Activated CD4-positive, alpha-beta memory T cell treated with anti-CD3 and anti-CD28 coated beads for 36 hours (primary cell): ENCODE measurements at regions of chr10 and their contacts with region 1.

Region 1: DNA sequence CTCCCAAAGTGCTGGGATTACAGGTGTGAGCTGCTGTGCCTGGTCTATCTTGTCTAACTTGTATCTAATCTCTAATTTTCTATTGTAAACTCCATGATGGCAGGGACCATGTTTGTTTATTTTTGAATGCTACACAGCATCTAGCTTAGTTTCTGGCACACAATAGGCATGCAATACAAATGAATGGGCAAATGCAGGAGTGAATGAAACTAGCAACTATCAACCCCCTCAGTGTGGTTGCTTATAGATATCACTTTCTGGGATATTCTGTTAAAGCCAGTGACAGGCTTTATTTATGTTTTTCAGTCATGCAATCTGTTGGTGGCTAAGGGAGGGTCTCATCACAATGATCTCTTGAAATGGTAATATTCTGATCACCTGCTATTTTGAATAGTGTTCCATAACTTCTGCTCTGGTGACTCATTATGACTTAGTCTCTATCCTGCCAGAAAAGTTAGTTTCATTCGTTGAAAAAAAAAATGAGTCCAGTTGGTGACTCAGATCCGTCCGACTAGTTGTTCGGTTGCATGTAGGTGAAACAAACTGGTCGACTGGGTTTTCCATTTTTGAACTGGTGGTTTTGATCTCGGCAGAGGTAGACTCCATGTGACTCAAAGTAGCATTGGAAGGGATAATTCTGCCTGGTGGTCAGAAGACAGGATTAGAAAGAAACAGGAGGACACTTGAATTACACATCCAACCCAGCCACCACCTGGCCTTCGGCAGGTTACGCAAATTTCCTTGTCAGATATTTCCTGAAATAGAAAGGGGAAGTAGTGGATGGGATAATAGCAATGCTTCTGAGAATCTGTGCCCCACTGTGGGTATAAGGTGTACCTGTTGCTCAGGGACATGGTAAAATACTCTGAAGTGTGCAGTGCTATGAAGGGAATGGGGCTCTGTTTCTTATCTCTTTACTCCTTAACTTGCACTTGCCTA is 76.8 kb downstream of the GATA3 start:
- DNase-seq: peak; percentile 71
- H3K4me3 Mint-ChIP-seq: peak overlapping the region; percentile 38
- H3K27ac Mint-ChIP-seq: peak overlapping the region; percentile 50
- H3K4me1 Mint-ChIP-seq: peaks cover 42% of the 10 kb centered on the region
- H3K27me3 Mint-ChIP-seq: peaks cover 9% of the 10 kb centered on the region

Region 2: GRCh38 chr10:8088504-8088903 is 42.7 kb before region 1 on chr10:
- CTCF ChIA-PET with region 1: no interaction called
- POLR2A ChIA-PET with region 1: no interaction called
- intact Hi-C with region 1: loop called (anchors 5 kb)
- DNase-seq: peak; percentile 65
- H3K4me3 Mint-ChIP-seq: no peak overlapping the region
- H3K27ac Mint-ChIP-seq: no peak overlapping the region
- H3K4me1 Mint-ChIP-seq: peaks cover 18% of the 10 kb centered on the region
- H3K27me3 Mint-ChIP-seq: no peaks in the 10 kb centered on the region

Region 3: DNA sequence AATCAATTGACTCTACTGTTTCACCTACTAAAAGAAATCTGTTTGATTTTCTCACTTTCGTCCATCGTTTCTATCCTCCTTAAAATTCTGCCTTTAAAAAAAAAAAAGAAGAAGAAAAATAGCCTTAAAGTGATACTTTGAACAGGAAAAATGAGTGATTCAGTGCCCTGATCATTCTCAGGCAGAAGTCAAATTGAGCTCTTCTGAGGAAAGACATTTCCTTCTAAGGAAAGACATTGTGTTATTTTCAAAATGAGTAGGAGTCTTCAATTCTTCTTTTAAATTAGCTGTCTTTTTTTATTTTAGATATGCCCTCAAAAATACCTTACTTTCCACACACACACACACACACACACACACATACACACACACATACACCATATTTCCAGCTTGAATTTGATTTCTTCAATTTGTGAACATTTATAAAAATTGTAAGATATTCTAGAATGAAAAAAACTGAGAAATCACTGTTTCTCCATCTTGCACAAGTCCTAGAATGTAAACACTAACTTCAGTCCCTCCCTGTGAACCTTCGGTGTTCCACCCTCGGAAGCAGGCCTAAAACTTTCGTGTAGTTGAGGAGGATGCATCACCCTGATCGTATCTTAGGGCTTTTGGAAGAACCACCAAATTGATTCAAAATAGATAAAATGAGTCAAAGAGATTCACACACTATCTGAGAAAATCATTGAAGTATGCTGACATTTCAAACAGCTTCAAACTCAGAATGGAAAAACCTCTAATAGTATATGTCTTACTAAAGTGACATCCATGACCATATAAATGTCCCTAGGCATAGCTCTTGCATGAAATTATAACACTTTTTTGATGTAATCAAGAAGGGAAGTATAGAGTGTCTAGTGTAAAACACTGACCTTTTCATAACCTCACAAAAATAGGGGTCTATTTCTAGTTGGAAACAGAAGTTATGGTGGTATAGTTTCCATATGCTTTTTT is 194.1 kb after region 1 on chr10:
- CTCF ChIA-PET with region 1: no interaction called
- POLR2A ChIA-PET with region 1: interaction called, 9 read pairs
- intact Hi-C with region 1: loop called (anchors 1 kb)
- DNase-seq: peak; percentile 53
- H3K4me3 Mint-ChIP-seq: peak overlapping the region; percentile 20
- H3K27ac Mint-ChIP-seq: peak overlapping the region; percentile 89
- H3K4me1 Mint-ChIP-seq: peaks cover 52% of the 10 kb centered on the region
- H3K27me3 Mint-ChIP-seq: peaks cover 3% of the 10 kb centered on the region

Region 4: DNA sequence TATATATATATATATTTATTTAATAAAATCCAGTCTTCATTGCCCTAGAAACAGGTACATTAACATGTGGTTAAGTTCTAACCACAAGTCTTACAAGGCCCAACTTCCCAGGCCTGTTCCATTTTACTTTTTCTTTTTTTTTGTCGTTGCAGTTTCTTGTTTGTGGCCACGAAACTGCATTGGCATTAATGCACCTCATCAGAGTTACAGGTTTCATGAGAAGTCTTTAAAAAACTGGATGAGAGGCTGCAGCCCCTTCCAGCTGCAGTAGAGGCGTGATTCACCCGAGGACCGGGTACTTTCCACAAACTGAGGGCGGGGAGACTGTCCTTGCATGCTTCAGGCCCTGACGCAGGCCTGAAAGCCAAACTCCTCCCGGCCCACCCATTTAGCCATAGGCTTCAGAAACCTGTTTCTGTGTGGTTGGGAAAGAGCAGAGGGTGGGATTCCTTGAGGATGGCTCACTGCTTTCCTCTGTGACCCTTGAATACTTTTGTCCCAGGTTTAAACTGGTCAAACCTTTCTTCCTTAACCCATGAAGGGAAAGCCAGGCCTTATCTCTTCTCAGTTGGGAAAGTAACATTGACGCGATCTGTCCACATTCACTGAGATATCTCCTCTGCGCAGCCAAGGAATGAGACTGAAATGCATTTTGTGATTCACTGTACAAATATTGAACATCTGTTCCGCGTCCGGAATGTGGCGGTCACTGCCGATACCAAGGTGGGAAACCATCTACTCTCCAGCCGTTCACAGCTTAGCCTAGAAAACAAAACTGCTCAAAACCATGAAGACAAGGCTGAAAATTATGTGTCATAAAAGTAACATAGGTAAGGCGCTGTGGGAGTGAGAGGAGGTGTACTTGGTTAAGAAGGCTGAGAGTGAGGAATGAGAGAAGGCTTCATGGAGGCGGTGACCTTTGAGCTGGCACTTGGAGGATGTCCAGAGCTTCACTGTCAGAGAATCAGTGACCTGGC is 235.0 kb after region 1 on chr10:
- CTCF ChIA-PET with region 1: no interaction called
- POLR2A ChIA-PET with region 1: no interaction called
- intact Hi-C with region 1: loop called (anchors 10 kb)
- DNase-seq: peak; percentile 82
- H3K4me3 Mint-ChIP-seq: no peak overlapping the region
- H3K27ac Mint-ChIP-seq: peak overlapping the region; percentile 91
- H3K4me1 Mint-ChIP-seq: peaks cover 58% of the 10 kb centered on the region
- H3K27me3 Mint-ChIP-seq: no peaks in the 10 kb centered on the region

Region 5: GRCh38 chr10:9091530-9092093 is 960.4 kb after region 1 on chr10:
- CTCF ChIA-PET with region 1: no interaction called
- POLR2A ChIA-PET with region 1: no interaction called
- intact Hi-C with region 1: loop called (anchors 1 kb)
- DNase-seq: peak; percentile 48
- H3K4me3 Mint-ChIP-seq: no peak overlapping the region
- H3K27ac Mint-ChIP-seq: peak overlapping the region; percentile 30
- H3K4me1 Mint-ChIP-seq: peaks cover 24% of the 10 kb centered on the region
- H3K27me3 Mint-ChIP-seq: no peaks in the 10 kb centered on the region